CD4-positive, alpha-beta T cell (primary cell): ENCODE measurements at regions of chr2 and their contacts with region 1.

Region 1: GRCh38 chr2:8872821-8873432 is 35.5 kb upstream of the KIDINS220 start:
- DNase-seq: peak in 3 of 14 experiments; percentile 19 to 31 (median 30)
- ATAC-seq: no peak
- H3K4me3 ChIP-seq: no peak overlapping the region
- H3K4me3 Mint-ChIP-seq: no peak overlapping the region
- H3K27ac ChIP-seq: no peak overlapping the region
- H3K27ac Mint-ChIP-seq: no peak overlapping the region
- H3K4me1 ChIP-seq: no peaks in the 10 kb centered on the region
- H3K4me1 Mint-ChIP-seq: no peaks in the 10 kb centered on the region
- H3K27me3 ChIP-seq: no peaks in the 10 kb centered on the region
- H3K27me3 Mint-ChIP-seq: no peaks in the 10 kb centered on the region
- CTCF ChIP-seq: peak; percentile 44

Region 2: GRCh38 chr2:9112079-9112721 is 239.3 kb after region 1 on chr2:
- CTCF ChIA-PET with region 1: no interaction called
- POLR2A ChIA-PET with region 1: no interaction called
- intact Hi-C with region 1: loop called in 1 of 2 experiments (anchors 10 kb)
- DNase-seq: peak in 1 of 14 experiments; percentile 26
- ATAC-seq: no peak
- H3K4me3 ChIP-seq: no peak overlapping the region
- H3K4me3 Mint-ChIP-seq: no peak overlapping the region
- H3K27ac ChIP-seq: no peak overlapping the region
- H3K27ac Mint-ChIP-seq: no peak overlapping the region
- H3K4me1 ChIP-seq: no peaks in the 10 kb centered on the region
- H3K4me1 Mint-ChIP-seq: no peaks in the 10 kb centered on the region
- H3K27me3 ChIP-seq: no peaks in the 10 kb centered on the region
- H3K27me3 Mint-ChIP-seq: no peaks in the 10 kb centered on the region
- CTCF ChIP-seq: no peak

Region 3: DNA sequence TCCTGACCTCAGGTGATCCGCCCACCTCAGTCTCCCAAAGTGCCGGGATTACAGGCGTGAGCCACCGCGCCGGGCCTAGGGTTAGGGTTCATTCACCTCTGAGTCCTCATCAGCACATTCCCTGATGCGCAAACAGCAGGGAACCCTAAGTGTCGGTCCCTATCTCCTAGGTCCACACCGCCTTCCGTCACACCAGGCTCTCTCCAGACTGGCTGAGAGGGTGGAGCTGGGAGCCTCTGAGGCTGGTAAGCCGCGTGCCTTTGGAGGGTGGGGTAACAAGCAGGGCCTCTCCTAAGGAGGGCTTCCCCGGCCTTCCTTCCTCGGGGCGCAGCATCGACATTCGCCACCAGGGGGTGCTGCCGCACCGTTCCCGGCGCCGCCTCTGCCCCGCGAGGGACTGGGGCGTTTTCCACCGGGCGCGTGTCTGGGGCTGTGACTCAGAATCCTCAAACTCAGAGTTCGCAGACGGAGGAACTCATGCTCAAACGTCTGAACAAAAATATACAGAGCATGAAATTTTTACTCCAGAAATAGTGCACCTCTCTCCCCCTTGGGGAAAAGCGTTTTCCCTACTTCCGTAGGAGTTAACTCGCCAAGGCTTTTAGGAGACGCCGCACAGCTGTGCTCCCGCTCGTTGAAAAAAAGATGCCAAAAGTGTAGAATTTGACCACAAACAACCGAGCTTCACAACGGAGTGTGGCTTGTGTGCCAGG is 269.8 kb after region 1 on chr2:
- CTCF ChIA-PET with region 1: no interaction called
- POLR2A ChIA-PET with region 1: no interaction called
- intact Hi-C with region 1: loop called in 1 of 2 experiments (anchors 5 kb)
- DNase-seq: peak; percentile 50 to 83 (median 70)
- ATAC-seq: peak; percentile 95
- H3K4me3 ChIP-seq: peak overlapping the region; percentile 20
- H3K4me3 Mint-ChIP-seq: no peak overlapping the region
- H3K27ac ChIP-seq: no peak overlapping the region
- H3K27ac Mint-ChIP-seq: no peak overlapping the region
- H3K4me1 ChIP-seq: peaks cover 7% of the 10 kb centered on the region
- H3K4me1 Mint-ChIP-seq: peaks cover 5% of the 10 kb centered on the region
- H3K27me3 ChIP-seq: peaks cover 0 to 6% of the 10 kb centered on the region in 2 experiments
- H3K27me3 Mint-ChIP-seq: peaks cover 39% of the 10 kb centered on the region
- CTCF ChIP-seq: peak; percentile 87